Mammary epithelial cell (primary cell): ENCODE measurements at regions of chrX and their contacts with region 1.

Region 1: DNA sequence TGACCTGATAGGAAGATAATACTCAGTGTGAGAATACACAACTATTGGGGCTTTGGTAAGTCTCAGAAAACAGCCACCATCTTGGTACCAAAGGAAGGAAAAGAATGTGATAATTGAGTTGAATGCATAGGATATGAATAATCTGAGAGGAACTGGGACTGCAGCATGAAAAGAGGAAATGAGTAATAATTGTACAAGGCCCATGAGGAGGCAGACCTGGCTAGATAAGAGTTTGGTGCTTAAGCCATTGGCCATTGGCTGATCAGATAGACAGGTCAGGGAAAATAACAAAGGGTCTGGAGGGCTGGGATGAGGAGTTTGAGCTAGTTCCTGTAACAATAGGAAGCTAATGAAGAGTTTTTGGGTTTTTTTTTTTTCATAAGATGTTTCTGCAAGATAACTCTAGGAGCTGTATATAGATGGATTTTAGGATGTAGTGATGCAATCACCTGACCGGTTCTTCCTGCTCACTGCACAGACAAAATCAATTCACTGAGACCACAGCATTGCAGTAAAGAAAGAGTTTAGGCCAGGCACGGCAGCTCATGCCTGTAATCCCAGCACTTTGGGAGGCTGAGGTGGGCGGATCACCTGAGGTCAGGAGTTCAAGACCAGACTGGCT is 5.3 kb upstream of the TRMT2B start:
- DNase-seq: peak; percentile 57
- H3K4me3 ChIP-seq: no peak overlapping the region
- H3K27ac ChIP-seq: no peak overlapping the region
- H3K4me1 ChIP-seq: no peaks in the 10 kb centered on the region
- H3K27me3 ChIP-seq: no peaks in the 10 kb centered on the region
- CTCF ChIP-seq: no peak

Region 2: GRCh38 chrX:101191217-101191750 is 134.1 kb after region 1 on chrX:
- CTCF ChIA-PET with region 1: no interaction called
- dilution Hi-C with region 1: no loop called
- in situ Hi-C with region 1: no loop called
- intact Hi-C with region 1: no loop called
- DNase-seq: no peak
- H3K4me3 ChIP-seq: no peak overlapping the region
- H3K27ac ChIP-seq: no peak overlapping the region
- H3K4me1 ChIP-seq: no peaks in the 10 kb centered on the region
- H3K27me3 ChIP-seq: no peaks in the 10 kb centered on the region
- CTCF ChIP-seq: no peak

Region 3: GRCh38 chrX:101206471-101206870 is 149.3 kb after region 1 on chrX:
- CTCF ChIA-PET with region 1: no interaction called
- dilution Hi-C with region 1: no loop called
- in situ Hi-C with region 1: no loop called
- intact Hi-C with region 1: loop called (anchors 5 kb)
- DNase-seq: peak; percentile 32
- H3K4me3 ChIP-seq: no peak overlapping the region
- H3K27ac ChIP-seq: no peak overlapping the region
- H3K4me1 ChIP-seq: no peaks in the 10 kb centered on the region
- H3K27me3 ChIP-seq: peaks cover 2% of the 10 kb centered on the region
- CTCF ChIP-seq: peak; percentile 34 to 51